Endothelial cell of umbilical vein (primary cell): ENCODE measurements at regions of chr14 and their contacts with region 1.

Region 1: GRCh38 chr14:22570132-22570949 is 18.7 kb downstream of the DAD1 start:
- DNase-seq: peak; percentile 83
- H3K4me3 ChIP-seq: no peak overlapping the region
- H3K27ac ChIP-seq: no peak overlapping the region
- H3K4me1 ChIP-seq: peaks cover 40% of the 10 kb centered on the region
- H3K27me3 ChIP-seq: no peaks in the 10 kb centered on the region
- CTCF ChIP-seq: peak; percentile 55 to 63
- POLR2A ChIP-seq: no peak

Region 2: GRCh38 chr14:22325676-22326400 is 244.5 kb before region 1 on chr14:
- CTCF ChIA-PET with region 1: no interaction called
- POLR2A ChIA-PET with region 1: no interaction called
- dilution Hi-C with region 1: no loop called
- intact Hi-C with region 1: no loop called
- DNase-seq: no peak
- H3K4me3 ChIP-seq: no peak overlapping the region
- H3K27ac ChIP-seq: no peak overlapping the region
- H3K4me1 ChIP-seq: no peaks in the 10 kb centered on the region
- H3K27me3 ChIP-seq: peaks cover 9 to 34% of the 10 kb centered on the region in 2 experiments
- CTCF ChIP-seq: no peak
- POLR2A ChIP-seq: no peak

Region 3: DNA sequence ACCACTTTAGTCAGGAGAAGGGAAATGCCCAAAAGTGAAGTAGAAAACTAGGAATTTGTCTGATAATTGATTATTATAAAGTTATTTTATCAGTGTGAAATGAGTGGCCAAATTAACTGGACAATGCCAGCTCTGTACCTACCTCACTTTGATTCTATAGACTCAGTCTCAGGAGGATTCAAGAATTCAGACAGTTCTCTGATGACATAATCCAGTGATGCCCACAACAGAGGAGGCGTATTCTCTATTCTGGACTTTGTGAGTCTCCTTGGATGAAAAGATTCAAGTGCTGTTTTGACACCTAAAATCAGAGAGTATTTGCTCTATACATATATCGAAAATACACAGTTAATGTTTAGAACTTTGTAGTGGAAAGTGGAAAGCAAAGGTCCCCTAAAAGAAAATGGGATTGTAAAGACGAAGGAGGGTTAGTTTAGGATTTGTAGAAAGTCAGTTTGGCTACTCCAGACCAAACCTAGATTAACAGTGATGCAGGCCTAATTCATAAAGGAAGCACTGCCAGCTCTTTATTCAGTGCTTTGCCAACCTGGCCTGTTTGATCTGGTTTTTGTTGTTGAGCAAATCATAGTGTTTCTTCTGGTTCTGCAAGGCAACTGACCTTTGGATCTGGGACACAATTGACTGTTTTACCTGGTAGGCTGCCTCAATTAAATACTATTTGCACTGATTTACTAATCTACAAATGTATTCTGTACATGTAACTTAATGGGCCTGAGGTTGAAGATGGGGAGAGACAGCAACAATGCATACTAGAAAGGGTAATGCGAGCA is 48.7 kb before region 1 on chr14:
- CTCF ChIA-PET with region 1: no interaction called
- POLR2A ChIA-PET with region 1: no interaction called
- dilution Hi-C with region 1: no loop called
- intact Hi-C with region 1: no loop called
- DNase-seq: no peak
- H3K4me3 ChIP-seq: no peak overlapping the region
- H3K27ac ChIP-seq: no peak overlapping the region
- H3K4me1 ChIP-seq: peaks cover 9% of the 10 kb centered on the region
- H3K27me3 ChIP-seq: peaks cover 0 to 1% of the 10 kb centered on the region in 2 experiments
- CTCF ChIP-seq: no peak
- POLR2A ChIP-seq: no peak

Region 4: DNA sequence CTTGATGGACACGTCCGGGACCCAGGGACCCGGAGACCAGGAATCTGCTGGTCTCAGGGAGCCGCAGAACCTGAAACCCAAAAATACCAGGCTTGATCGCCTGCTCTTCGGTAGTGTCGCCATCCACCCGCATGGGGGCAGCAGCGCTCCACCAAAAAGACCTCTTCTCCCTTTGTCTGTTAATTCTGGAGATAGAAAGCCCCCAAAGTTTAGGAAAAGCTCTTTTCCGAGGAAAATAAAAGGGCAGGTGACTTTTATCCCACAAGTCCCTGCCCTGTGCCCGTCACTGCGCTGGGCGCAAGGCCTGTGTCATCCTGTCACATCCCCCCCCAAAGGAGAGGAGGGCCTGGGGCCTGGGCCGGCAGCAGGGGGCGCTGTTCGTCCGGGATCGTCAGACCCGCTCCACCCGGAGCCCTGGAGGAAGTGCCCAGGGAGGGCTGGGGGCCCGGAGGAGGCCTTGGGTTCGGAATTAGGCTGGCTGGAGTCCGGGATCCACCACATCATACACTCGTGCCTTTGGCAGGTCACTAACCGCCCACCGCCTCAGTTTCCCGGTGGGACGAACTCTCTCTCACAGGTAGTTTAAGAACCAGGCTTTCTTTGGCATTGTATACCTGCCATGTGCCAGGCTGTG is 13.2 kb before region 1 on chr14:
- CTCF ChIA-PET with region 1: interaction called, 43 read pairs
- POLR2A ChIA-PET with region 1: no interaction called
- dilution Hi-C with region 1: no loop called
- intact Hi-C with region 1: no loop called
- DNase-seq: peak; percentile 71
- H3K4me3 ChIP-seq: peak overlapping the region in 2 of 3 experiments; percentile 10 to 14
- H3K27ac ChIP-seq: peak overlapping the region; percentile 88
- H3K4me1 ChIP-seq: peaks cover 52% of the 10 kb centered on the region
- H3K27me3 ChIP-seq: no peaks in the 10 kb centered on the region
- CTCF ChIP-seq: peak; percentile 84 to 99
- POLR2A ChIP-seq: no peak

Region 5: GRCh38 chr14:22598099-22598899 is 28.0 kb after region 1 on chr14 and contains the start of gene ABHD4:
- CTCF ChIA-PET with region 1: interaction called, 102 read pairs
- POLR2A ChIA-PET with region 1: interaction called, 10 read pairs
- dilution Hi-C with region 1: no loop called
- intact Hi-C with region 1: no loop called
- DNase-seq: peak; percentile 79
- H3K4me3 ChIP-seq: peak within 1 kb of the TSS; percentile 56 to 68 (median 62)
- H3K27ac ChIP-seq: peak within 1 kb of the TSS; percentile 53
- H3K4me1 ChIP-seq: peaks cover 14% of the 10 kb centered on the region
- H3K27me3 ChIP-seq: peaks cover 0 to 5% of the 10 kb centered on the region in 2 experiments
- CTCF ChIP-seq: no peak
- POLR2A ChIP-seq: peak; percentile 44
- total RNA-seq, gene ABHD4: 22.4 and 34.8 TPM in 2 replicates

Region 6: DNA sequence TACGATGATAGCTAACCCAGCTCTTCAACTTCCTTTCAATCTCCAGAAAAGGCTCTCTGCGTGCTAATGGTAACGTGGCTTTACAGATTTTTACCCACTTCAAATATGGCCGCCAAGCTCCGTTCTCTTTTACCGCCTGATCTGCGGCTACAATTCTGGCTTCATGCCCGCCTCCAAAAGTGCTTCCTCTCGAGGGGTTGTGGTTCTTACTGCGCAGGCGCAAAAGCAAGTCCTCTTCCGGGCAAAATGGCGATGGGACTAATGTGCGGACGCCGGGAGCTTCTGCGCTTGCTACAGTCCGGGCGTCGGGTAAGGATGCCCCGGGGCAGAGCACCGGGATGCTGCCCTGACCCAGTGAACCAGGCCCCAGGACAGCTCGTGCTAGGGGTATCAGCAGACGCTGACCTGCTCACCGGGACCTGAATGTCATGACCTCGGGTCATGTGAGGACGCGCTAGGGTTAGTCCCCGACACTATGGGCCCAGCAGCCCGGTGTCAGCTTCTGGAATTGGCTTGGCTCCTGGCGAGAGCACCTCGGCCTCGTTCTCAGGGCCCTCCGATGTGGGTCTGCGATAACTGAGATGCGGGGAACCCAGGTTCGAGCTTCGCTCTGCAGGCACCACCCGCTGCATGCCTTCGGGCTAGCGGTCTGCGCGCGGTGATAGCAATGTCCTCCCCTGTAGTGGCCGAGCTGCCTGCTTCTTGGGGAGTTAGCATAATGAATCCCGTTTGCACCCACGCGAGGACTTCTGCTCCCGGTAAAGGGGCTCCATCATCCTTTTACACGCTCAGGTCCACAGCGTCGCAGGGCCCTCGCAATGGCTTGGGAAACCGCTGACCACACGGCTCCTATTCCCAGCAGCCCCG is 196.3 kb after region 1 on chr14 and contains the start of gene OXA1L:
- CTCF ChIA-PET with region 1: interaction called, 11 read pairs
- POLR2A ChIA-PET with region 1: no interaction called
- dilution Hi-C with region 1: no loop called
- intact Hi-C with region 1: loop called (anchors 5 kb)
- DNase-seq: peak; percentile 98
- H3K4me3 ChIP-seq: peak within 1 kb of the TSS; percentile 77 to 99 (median 92)
- H3K27ac ChIP-seq: peak within 1 kb of the TSS; percentile 84
- H3K4me1 ChIP-seq: peaks cover 24% of the 10 kb centered on the region
- H3K27me3 ChIP-seq: no peaks in the 10 kb centered on the region
- CTCF ChIP-seq: no peak
- POLR2A ChIP-seq: peak; percentile 81
- total RNA-seq, gene OXA1L: 200 and 212 TPM in 2 replicates

Region 7: GRCh38 chr14:22836301-22837113 is 266.2 kb after region 1 on chr14 and contains the start of gene MMP14:
- CTCF ChIA-PET with region 1: interaction called, 39 read pairs
- POLR2A ChIA-PET with region 1: interaction called, 3 read pairs
- dilution Hi-C with region 1: no loop called
- intact Hi-C with region 1: loop called (anchors 1 kb)
- DNase-seq: peak; percentile 92
- H3K4me3 ChIP-seq: peak within 1 kb of the TSS; percentile 75 to 94 (median 86)
- H3K27ac ChIP-seq: peak within 1 kb of the TSS; percentile 84
- H3K4me1 ChIP-seq: peaks cover 32% of the 10 kb centered on the region
- H3K27me3 ChIP-seq: no peaks in the 10 kb centered on the region
- CTCF ChIP-seq: peak; percentile 26 to 54
- POLR2A ChIP-seq: peak; percentile 95
- total RNA-seq, gene MMP14: 603 and 615 TPM in 2 replicates